Endothelial cell of umbilical vein (primary cell): ENCODE measurements at regions of chr3 and their contacts with region 1.

Region 1: GRCh38 chr3:129230311-129231019 is 18.9 kb upstream of the COPG1 start:
- DNase-seq: peak; percentile 46
- H3K4me3 ChIP-seq: no peak overlapping the region
- H3K27ac ChIP-seq: no peak overlapping the region
- H3K4me1 ChIP-seq: peaks cover 35% of the 10 kb centered on the region
- H3K27me3 ChIP-seq: no peaks in the 10 kb centered on the region
- CTCF ChIP-seq: no peak
- POLR2A ChIP-seq: no peak

Region 2: GRCh38 chr3:128367753-128368152 is 862.7 kb before region 1 on chr3:
- CTCF ChIA-PET with region 1: no interaction called
- POLR2A ChIA-PET with region 1: no interaction called
- dilution Hi-C with region 1: no loop called
- intact Hi-C with region 1: no loop called
- DNase-seq: no peak
- H3K4me3 ChIP-seq: no peak overlapping the region
- H3K27ac ChIP-seq: no peak overlapping the region
- H3K4me1 ChIP-seq: peaks cover 3% of the 10 kb centered on the region
- H3K27me3 ChIP-seq: no peaks in the 10 kb centered on the region
- CTCF ChIP-seq: no peak
- POLR2A ChIP-seq: no peak

Region 3: GRCh38 chr3:129160891-129161859 is 69.3 kb before region 1 on chr3 and contains the start of gene ISY1:
- CTCF ChIA-PET with region 1: interaction called, 9 read pairs
- POLR2A ChIA-PET with region 1: no interaction called
- dilution Hi-C with region 1: no loop called
- intact Hi-C with region 1: loop called (anchors 1 kb)
- DNase-seq: peak; percentile 95
- H3K4me3 ChIP-seq: peak within 1 kb of the TSS; percentile 82 to 100 (median 99)
- H3K27ac ChIP-seq: peak within 1 kb of the TSS; percentile 86
- H3K4me1 ChIP-seq: peaks cover 19% of the 10 kb centered on the region
- H3K27me3 ChIP-seq: no peaks in the 10 kb centered on the region
- CTCF ChIP-seq: peak; percentile 88 to 93
- POLR2A ChIP-seq: peak; percentile 99
- total RNA-seq, gene ISY1: 50.6 and 59.4 TPM in 2 replicates

Region 4: DNA sequence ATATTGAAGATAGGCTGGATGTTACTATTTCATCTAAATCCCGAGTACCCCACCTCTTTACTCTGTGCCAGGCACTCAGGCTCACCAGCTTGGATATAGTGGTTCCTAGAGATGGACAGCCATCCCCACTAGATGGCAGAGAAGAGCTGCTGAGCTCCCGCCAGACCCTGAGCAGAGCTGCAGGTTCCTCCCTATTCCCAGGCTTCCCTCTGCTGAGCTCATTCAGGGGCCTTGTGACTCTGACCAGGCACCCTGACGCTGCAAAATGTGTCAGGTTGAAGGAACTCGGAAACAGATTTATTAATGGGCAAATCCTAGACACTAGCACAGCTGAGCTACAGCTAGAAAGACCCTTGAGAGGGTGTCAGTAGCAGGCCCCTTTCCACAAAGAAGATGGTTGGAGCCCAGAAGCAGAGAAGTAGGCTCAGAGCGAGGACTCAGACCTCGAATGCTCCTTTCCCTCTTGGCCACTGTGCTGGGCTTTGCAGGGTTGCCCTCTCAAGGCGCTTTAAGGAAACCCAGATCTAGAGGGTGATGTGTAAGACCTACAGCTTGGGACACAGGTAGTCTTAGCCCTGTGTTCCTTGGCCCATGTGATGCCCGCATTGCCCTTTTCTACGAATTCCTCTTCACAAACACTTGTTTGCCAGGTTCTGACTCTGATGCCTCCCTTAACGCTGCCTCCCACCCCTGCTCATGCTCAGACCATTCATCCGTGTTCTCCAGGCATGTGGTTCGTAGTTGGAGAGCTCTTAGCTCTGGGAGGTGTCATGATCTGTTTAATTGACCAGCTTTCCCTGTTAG is 260.0 kb after region 1 on chr3:
- CTCF ChIA-PET with region 1: no interaction called
- POLR2A ChIA-PET with region 1: no interaction called
- dilution Hi-C with region 1: no loop called
- intact Hi-C with region 1: no loop called
- DNase-seq: peak; percentile 90
- H3K4me3 ChIP-seq: no peak overlapping the region
- H3K27ac ChIP-seq: peak overlapping the region; percentile 81
- H3K4me1 ChIP-seq: peaks cover 23% of the 10 kb centered on the region
- H3K27me3 ChIP-seq: no peaks in the 10 kb centered on the region
- CTCF ChIP-seq: peak; percentile 86 to 90
- POLR2A ChIP-seq: no peak

Region 5: DNA sequence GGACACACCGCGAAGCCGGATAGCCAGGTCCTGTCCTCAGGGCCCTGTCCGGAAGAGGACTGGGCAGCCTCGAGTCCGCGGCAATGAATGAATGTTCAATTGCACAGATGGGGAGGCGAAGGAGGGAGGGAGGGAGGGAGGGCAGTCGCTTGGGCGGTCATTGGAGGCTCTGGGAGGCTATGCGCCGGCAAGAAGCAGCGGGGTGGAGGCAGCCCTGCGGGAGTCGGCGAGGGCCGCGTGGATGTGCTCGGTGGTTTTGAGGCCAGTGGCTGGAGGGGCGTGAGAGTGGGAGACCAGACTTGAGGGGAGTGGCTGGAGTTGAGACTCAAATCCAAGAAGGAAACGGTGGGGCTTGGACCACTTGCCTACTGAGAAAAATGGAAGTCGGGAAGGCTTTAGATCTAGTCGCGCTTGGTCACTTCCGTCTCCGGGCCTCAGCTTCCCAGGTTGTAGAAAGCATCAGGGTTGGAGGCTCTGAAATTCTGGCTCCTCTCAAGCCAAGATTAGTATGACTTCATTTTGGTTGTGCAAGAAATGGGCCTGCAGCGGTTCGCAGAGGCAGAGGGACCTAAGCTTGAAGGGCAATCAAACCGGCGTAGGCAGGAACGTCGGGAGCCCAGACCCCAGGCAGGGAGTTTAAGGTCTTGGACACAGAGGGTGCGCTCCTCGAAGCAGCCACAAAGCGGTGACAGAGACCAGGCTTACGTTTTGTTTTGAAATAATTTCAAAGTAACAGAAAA is 397.1 kb after region 1 on chr3:
- CTCF ChIA-PET with region 1: no interaction called
- POLR2A ChIA-PET with region 1: no interaction called
- dilution Hi-C with region 1: no loop called
- intact Hi-C with region 1: no loop called
- DNase-seq: peak; percentile 90
- H3K4me3 ChIP-seq: peak overlapping the region in 2 of 3 experiments; percentile 11 to 42
- H3K27ac ChIP-seq: peak overlapping the region; percentile 85
- H3K4me1 ChIP-seq: peaks cover 50% of the 10 kb centered on the region
- H3K27me3 ChIP-seq: no peaks in the 10 kb centered on the region
- CTCF ChIP-seq: peak; percentile 86 to 87
- POLR2A ChIP-seq: peak; percentile 51